ENCODE measurements at regions of chr7 and their contacts with region 1.

Region 1: GRCh38 chr7:50369143-50370026 is 64.9 kb downstream of the IKZF1 start:
- DNase-seq: peak; percentile 57
- H3K4me3 ChIP-seq: no peak overlapping the region; a peak in 1 of 4 replicates
- H3K27ac ChIP-seq: no peak overlapping the region
- H3K4me1 ChIP-seq: no peaks in the 10 kb centered on the region
- H3K27me3 ChIP-seq: 0 out of 2 replicates have a peak, but pooled peaks cover 5% of the 10 kb centered on the region
- CTCF ChIP-seq: peak; percentile 51
- EP300 ChIP-seq: no peak
- RAD21 ChIP-seq: peak; percentile 74

Region 2: DNA sequence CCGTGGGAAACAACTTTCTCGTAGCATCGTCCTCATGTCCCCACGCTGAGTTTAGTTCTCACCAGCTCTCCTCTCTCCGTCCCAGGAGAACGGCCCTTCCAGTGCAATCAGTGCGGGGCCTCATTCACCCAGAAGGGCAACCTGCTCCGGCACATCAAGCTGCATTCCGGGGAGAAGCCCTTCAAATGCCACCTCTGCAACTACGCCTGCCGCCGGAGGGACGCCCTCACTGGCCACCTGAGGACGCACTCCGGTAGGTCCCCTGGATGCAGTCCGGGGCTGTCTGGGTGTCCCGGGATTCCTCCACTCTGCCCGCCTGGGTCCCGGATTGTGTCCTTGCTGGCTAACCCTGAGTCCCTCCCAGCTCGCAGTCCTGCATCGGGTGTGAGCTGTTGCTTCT is 13.1 kb after region 1 on chr7:
- CTCF ChIA-PET with region 1: interaction called, 11 read pairs
- POLR2A ChIA-PET with region 1: no interaction called
- DNase-seq: no peak
- H3K4me3 ChIP-seq: no peak overlapping the region
- H3K27ac ChIP-seq: no peak overlapping the region
- H3K4me1 ChIP-seq: peaks cover 0 to 10% of the 10 kb centered on the region in 2 experiments; a peak in 1 of 4 replicates
- H3K27me3 ChIP-seq: peaks cover 15% of the 10 kb centered on the region
- CTCF ChIP-seq: no peak
- EP300 ChIP-seq: no peak
- RAD21 ChIP-seq: no peak

Region 3: DNA sequence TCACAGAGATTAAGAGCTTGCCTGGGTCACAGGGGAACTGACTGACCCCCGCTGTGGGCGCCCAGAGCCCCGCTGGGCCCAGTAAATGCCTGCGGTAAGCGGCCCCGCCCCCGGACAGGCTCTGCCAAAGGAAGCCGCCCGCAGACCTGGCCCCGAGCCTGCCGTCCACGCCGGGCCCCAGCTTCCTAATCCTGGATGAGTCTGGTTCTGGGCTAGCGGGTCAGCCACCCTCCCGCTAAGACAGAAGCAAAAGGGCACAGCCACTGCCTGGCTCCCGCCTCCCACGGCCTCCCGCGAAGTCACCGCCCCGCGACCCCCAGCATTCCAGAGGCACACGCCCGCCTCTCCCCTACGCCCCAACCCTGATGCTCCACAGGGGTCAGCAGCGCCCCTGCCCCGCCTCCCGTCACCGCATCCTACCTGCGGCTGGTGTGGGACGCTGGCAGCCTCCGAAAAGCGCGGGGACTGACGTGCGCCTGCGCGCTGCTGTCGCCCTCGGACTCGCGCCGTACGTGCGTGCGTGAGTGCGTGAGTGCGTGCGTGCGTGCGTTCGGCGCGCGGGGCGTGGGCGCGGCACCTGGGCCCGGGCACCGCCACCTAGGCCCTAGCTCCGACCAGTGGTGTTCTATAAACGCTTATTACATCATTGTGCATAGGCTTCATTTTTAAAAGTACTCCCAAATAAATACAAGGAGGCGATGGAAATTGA is 80.7 kb after region 1 on chr7 and contains the start of gene FIGNL1:
- CTCF ChIA-PET with region 1: no interaction called
- POLR2A ChIA-PET with region 1: no interaction called
- DNase-seq: peak; percentile 94
- H3K4me3 ChIP-seq: peak within 1 kb of the TSS; percentile 77 to 85
- H3K27ac ChIP-seq: peak within 1 kb of the TSS; percentile 21 to 74; a peak in 3 of 4 replicates
- H3K4me1 ChIP-seq: peaks cover 0 to 20% of the 10 kb centered on the region in 2 experiments; a peak in 2 of 4 replicates
- H3K27me3 ChIP-seq: 0 out of 2 replicates have a peak, but pooled peaks cover 2% of the 10 kb centered on the region
- CTCF ChIP-seq: no peak
- EP300 ChIP-seq: 0 out of 4 replicates have a peak, but pooled peaks of 1 of the 2 experiments have one; percentile 31
- RAD21 ChIP-seq: no peak
- polyA plus RNA-seq, gene FIGNL1: 6.7 and 8.6 TPM in 2 replicates

Region 4: GRCh38 chr7:51187941-51188340 is 818.6 kb after region 1 on chr7:
- CTCF ChIA-PET with region 1: no interaction called
- POLR2A ChIA-PET with region 1: no interaction called
- DNase-seq: peak; percentile 34
- H3K4me3 ChIP-seq: no peak overlapping the region
- H3K27ac ChIP-seq: no peak overlapping the region
- H3K4me1 ChIP-seq: no peaks in the 10 kb centered on the region
- H3K27me3 ChIP-seq: no peaks in the 10 kb centered on the region
- CTCF ChIP-seq: no peak
- EP300 ChIP-seq: no peak
- RAD21 ChIP-seq: peak; percentile 34; the same call in 1 of the 2 replicates

Measured in SK-N-SH (cell line).